WTC11 (cell line): ENCODE measurements at regions of chr1 and their contacts with region 1.

Region 1: DNA sequence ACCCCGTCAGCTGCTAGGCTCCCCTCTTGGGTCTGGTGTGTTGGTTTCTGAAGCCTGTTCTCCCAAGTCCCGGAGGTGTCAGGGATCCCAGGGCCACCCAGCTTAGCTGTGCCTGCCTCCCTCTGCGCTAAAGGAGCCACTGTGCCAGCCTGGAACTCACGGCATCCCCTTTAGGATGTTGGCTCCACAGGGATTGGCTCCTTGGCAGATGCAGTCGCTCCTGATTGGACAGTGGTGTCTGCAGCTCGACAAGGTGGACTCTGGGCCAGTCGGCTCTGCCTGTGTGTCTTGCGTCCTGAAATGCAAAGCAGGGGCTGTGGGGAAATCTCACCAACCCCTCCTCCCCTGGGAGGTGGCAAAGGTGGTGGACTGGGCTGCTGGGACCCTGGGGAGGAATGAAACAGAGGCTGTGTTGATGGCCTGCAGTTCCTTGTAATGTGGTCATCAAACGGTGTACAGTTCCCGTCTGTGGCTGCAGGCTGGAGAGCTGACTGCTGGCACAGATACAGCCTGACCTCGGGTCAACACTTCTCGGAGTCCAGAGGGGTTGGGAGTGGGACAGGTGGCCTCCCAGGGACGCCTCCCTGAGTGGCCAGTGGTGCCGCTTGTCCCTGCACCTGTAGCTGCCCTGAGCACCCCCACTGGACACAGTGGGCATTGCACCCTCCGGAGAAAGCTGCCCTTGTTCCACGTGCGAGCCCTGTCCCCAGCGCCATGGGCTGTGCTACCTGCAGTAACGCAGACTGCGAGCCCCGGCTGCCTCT is 11.5 kb upstream of the KCNAB2 start:
- DNase-seq: peak; percentile 86
- ATAC-seq: peak; percentile 91
- H3K4me3 Mint-ChIP-seq: peak overlapping the region; percentile 44
- H3K27ac Mint-ChIP-seq: no peak overlapping the region
- H3K4me1 Mint-ChIP-seq: peaks cover 17% of the 10 kb centered on the region
- H3K27me3 Mint-ChIP-seq: peaks cover 5% of the 10 kb centered on the region
- CTCF ChIP-seq: peak; percentile 95

Region 2: GRCh38 chr1:5740865-5741860 is 293.0 kb before region 1 on chr1:
- CTCF ChIA-PET with region 1: no interaction called
- POLR2A ChIA-PET with region 1: no interaction called
- DNase-seq: no peak
- ATAC-seq: no peak
- H3K4me3 Mint-ChIP-seq: no peak overlapping the region
- H3K27ac Mint-ChIP-seq: no peak overlapping the region
- H3K4me1 Mint-ChIP-seq: peaks cover under 1% of the 10 kb centered on the region; the same call in 1 of the 2 replicates
- H3K27me3 Mint-ChIP-seq: no peaks in the 10 kb centered on the region; the same call in 1 of the 2 replicates
- CTCF ChIP-seq: no peak

Region 3: DNA sequence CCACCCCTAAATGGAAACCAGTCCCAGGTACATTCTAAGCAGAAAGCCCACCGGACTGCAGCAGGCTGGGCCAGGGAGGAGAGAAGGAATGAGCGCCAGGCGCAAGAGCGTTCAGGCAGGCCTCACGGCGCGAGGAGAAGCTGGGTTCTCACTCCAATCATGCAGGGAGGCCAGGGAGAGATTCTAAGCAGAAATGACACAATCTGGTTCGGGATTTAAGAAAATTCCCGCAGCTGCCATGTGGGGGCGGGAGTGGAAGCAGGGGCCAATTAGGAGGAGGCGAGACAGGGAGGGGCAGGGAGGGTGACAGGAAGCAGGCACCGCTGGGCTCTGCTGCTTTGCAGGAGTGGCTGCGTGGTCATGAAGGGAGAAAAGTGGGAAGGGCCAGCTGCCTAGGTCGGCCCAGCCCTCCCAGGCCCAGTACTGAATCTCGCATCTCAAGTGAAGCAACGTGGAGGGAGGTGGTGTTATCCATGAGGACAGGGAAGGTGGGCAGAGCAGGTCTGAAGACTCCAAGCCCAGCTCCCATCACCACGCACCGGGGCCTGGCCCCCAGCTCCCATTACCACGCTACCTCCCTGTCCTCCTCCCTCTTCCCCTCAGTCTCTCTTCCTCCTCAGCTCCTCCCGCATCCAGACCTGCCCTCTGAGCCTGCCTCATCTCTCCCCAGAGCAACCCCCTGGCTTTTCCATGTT is 53.7 kb before region 1 on chr1:
- CTCF ChIA-PET with region 1: interaction called, 26 read pairs
- POLR2A ChIA-PET with region 1: no interaction called
- DNase-seq: peak; percentile 88
- ATAC-seq: peak; percentile 98
- H3K4me3 Mint-ChIP-seq: peak overlapping the region; percentile 57
- H3K27ac Mint-ChIP-seq: peak overlapping the region; percentile 69
- H3K4me1 Mint-ChIP-seq: peaks cover 15% of the 10 kb centered on the region
- H3K27me3 Mint-ChIP-seq: no peaks in the 10 kb centered on the region
- CTCF ChIP-seq: no peak

Region 4: DNA sequence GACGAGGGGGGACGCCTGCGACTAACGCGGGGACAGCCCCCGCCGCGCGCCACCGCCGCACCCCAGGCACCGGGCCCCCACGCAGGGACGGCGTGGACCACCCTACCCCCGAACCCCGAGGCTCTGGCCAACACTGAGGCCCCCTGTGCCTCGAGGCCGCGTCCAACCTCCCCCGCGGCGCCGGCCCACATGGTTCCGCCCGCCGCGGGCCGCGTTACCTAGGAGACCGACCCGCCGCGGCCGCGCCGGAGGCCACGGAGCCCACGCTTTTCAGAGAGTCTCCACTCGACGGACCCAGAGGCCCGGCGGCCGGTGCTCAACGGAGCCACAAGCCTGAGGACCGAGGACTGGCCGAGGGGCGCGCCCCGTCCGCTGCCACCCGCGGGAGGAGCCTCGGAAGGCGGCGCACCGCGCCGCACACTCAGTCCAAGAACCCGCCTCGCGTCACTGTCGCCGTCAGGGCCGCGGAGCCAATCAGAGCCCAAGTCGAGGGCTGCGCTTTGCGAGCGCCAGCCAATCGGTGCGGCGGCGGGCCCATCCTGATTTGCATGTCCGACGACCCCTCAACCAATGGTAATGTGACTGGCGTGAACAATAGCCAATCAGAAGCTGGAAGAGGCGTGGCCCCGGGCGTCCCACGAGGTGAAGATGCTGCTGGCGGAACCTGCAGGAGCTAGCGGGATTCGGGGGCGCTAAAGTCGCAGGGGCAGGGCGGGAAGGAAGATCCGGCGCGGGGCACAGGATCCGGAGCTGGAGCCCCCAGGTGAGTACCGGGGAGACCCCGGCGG is 41.9 kb before region 1 on chr1 and contains the start of gene NPHP4:
- CTCF ChIA-PET with region 1: interaction called, 41 read pairs
- POLR2A ChIA-PET with region 1: no interaction called
- DNase-seq: peak; percentile 100
- ATAC-seq: peak; percentile 91
- H3K4me3 Mint-ChIP-seq: peak within 1 kb of the TSS; percentile 90
- H3K27ac Mint-ChIP-seq: no peak within 1 kb of the TSS; the same call in 1 of the 2 replicates
- H3K4me1 Mint-ChIP-seq: peaks cover 22% of the 10 kb centered on the region
- H3K27me3 Mint-ChIP-seq: peaks cover 35% of the 10 kb centered on the region
- CTCF ChIP-seq: no peak
- total RNA-seq, gene NPHP4: 10.6 to 16.8 TPM (median 12.0 TPM) in 3 replicates

Region 5: DNA sequence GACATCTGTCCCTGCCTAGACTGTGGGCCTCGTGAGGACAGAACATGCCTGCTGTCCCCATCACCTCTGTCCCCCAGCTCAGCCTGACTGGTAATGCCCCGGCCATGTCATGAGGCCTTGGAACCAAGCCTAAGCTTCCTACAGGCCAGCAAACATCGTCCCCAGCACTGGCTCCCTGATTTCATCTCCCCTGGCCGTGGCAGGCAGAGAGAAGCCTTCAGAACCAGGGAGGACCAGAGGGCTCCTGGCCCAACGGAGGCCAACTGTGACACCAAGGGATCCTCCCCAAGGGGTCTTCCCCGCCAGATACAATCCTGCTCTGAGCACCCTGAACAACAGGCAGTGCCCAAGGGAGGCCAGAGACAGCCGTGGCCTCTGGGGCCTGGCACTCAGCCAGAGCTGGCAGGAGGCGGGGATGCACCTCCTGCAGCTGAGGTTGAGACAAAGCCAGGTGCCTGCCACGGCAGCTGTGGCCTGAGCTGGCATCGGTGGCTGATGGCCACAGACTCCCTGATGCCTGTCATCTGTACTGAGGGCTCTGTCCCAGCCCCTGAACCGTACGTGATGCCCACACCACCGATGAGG is 32.1 kb before region 1 on chr1:
- CTCF ChIA-PET with region 1: interaction called, 17 read pairs
- POLR2A ChIA-PET with region 1: no interaction called
- DNase-seq: peak; percentile 9
- ATAC-seq: no peak
- H3K4me3 Mint-ChIP-seq: no peak overlapping the region
- H3K27ac Mint-ChIP-seq: no peak overlapping the region
- H3K4me1 Mint-ChIP-seq: peaks cover 11% of the 10 kb centered on the region
- H3K27me3 Mint-ChIP-seq: no peaks in the 10 kb centered on the region
- CTCF ChIP-seq: no peak

Region 6: GRCh38 chr1:6007318-6008083 is 26.7 kb before region 1 on chr1:
- CTCF ChIA-PET with region 1: interaction called, 17 read pairs
- POLR2A ChIA-PET with region 1: no interaction called
- DNase-seq: peak; percentile 5
- ATAC-seq: no peak
- H3K4me3 Mint-ChIP-seq: no peak overlapping the region
- H3K27ac Mint-ChIP-seq: no peak overlapping the region
- H3K4me1 Mint-ChIP-seq: peaks cover 11% of the 10 kb centered on the region
- H3K27me3 Mint-ChIP-seq: no peaks in the 10 kb centered on the region; the same call in 1 of the 2 replicates
- CTCF ChIP-seq: no peak

Region 7: DNA sequence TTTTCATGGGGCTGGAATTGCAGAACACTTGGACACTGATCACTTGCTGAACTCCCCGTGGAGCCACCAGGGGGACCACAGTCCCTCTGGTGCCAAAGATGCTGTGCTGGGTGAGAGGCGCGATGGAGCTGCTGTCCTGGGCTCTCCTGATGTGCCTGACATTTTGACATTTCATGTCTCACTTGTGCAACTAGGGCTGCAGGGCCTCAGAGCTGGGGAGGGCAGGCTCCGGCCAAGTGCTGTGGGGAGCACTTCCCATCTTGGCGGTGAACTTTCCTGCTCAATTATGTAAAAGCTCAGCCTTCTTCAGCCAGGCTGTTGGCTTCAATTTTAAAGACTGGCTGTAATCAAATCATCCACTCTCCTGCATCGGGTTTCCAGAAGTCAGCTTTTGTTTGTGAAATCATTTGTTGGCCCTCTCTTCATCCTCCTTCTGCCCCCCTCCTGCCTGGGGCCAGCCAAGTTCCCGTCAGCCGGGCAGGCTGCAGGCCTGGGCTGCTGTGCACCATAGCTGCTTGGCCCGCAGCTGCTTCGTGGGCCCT is 48.3 kb after region 1 on chr1:
- CTCF ChIA-PET with region 1: interaction called, 19 read pairs
- POLR2A ChIA-PET with region 1: no interaction called
- DNase-seq: no peak
- ATAC-seq: peak; percentile 58
- H3K4me3 Mint-ChIP-seq: no peak overlapping the region
- H3K27ac Mint-ChIP-seq: no peak overlapping the region
- H3K4me1 Mint-ChIP-seq: peaks cover 5% of the 10 kb centered on the region; the same call in 1 of the 2 replicates
- H3K27me3 Mint-ChIP-seq: no peaks in the 10 kb centered on the region
- CTCF ChIP-seq: no peak

Region 8: GRCh38 chr1:6157528-6158174 is 123.5 kb after region 1 on chr1:
- CTCF ChIA-PET with region 1: interaction called, 11 read pairs
- POLR2A ChIA-PET with region 1: no interaction called
- DNase-seq: no peak
- ATAC-seq: no peak
- H3K4me3 Mint-ChIP-seq: no peak overlapping the region
- H3K27ac Mint-ChIP-seq: no peak overlapping the region
- H3K4me1 Mint-ChIP-seq: peaks cover 6% of the 10 kb centered on the region
- H3K27me3 Mint-ChIP-seq: no peaks in the 10 kb centered on the region
- CTCF ChIP-seq: no peak